Breast epithelium (tissue), 4 donors: ENCODE measurements at regions of chr2 and their contacts with region 1.

Region 1: DNA sequence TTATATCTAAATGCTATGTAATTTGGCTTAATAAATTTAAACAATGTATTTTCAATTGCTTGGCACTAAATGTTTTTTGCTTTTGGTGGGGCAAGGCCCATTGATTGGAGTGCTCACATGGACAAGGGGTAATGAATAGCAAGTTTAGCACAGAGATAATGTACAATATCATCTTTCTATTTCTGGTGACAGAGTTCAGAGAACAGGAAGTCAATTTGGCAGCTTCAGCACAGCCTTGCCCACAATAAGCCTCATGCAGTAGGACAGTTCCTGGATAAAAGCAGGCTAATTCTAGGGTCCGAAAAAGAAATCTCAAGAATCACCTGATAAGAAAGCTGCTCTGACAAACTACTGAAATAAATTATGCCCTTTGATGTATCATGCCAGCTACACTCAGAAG is 443.9 kb upstream of the FSHR start:
- DNase-seq: no peak
- H3K4me3 ChIP-seq: no peak overlapping the region
- H3K27ac ChIP-seq: no peak overlapping the region
- H3K4me1 ChIP-seq: no peaks in the 10 kb centered on the region
- H3K27me3 ChIP-seq: no peaks in the 10 kb centered on the region
- CTCF ChIP-seq: no peak
- POLR2A ChIP-seq: no peak

Region 2: GRCh38 chr2:49111456-49111855 is 486.8 kb before region 1 on chr2:
- intact Hi-C with region 1: loop called (anchors 5 kb)
- DNase-seq: no peak
- H3K4me3 ChIP-seq: no peak overlapping the region
- H3K27ac ChIP-seq: no peak overlapping the region
- H3K4me1 ChIP-seq: no peaks in the 10 kb centered on the region
- H3K27me3 ChIP-seq: no peaks in the 10 kb centered on the region
- CTCF ChIP-seq: no peak
- POLR2A ChIP-seq: no peak

Region 3: GRCh38 chr2:49616800-49617199 is 18.6 kb after region 1 on chr2:
- intact Hi-C with region 1: no loop called
- DNase-seq: no peak
- H3K4me3 ChIP-seq: no peak overlapping the region
- H3K27ac ChIP-seq: no peak overlapping the region
- H3K4me1 ChIP-seq: no peaks in the 10 kb centered on the region
- H3K27me3 ChIP-seq: no peaks in the 10 kb centered on the region
- CTCF ChIP-seq: peak in 2 of 3 donors; percentile 46 to 51
- POLR2A ChIP-seq: no peak

Region 4: DNA sequence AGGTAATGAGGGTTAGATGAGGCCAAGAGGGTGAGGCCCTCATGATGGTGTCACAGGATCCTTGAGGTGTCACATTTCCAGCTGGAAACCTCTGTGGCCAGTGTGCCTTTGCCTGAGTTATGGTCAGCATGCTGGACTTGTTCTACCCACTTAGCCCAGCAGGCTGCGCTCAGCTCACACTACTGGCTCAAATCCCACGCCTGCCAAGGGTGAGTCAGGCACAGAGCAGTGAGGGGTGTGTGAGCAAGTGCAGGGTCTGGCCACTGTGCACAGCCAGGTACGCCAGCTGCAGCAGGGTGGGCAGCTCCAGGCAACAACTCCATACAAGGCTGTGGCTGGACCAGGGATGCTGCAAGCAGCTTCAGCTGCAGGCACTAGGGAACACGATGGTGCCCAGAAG is 172.7 kb after region 1 on chr2:
- intact Hi-C with region 1: no loop called
- DNase-seq: no peak
- H3K4me3 ChIP-seq: no peak overlapping the region
- H3K27ac ChIP-seq: no peak overlapping the region
- H3K4me1 ChIP-seq: no peaks in the 10 kb centered on the region
- H3K27me3 ChIP-seq: no peaks in the 10 kb centered on the region
- CTCF ChIP-seq: peak in 1 of 3 donors; percentile 9
- POLR2A ChIP-seq: no peak

Region 5: DNA sequence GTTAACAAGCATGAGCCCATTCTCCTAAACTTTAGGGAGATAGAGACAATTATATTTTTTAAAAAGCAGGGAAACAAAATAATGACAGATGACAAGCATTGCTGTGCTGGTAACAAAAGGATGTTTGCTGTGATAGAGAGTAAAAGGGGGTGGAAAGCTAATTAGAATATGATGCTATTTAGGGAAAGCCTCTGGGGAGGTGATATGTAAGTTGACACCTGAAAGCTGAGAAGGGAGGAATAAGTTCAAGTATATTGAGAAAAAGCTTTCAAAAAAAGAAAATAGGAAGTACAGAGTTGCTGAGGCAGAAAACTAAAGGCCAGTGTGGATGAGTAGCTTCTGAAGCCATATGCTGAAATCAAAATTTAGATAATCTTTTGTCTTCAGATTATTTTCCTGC is 1998.9 kb after region 1 on chr2:
- intact Hi-C with region 1: no loop called
- DNase-seq: no peak
- H3K4me3 ChIP-seq: no peak overlapping the region
- H3K27ac ChIP-seq: no peak overlapping the region
- H3K4me1 ChIP-seq: no peaks in the 10 kb centered on the region
- H3K27me3 ChIP-seq: no peaks in the 10 kb centered on the region
- CTCF ChIP-seq: no peak
- POLR2A ChIP-seq: no peak